B cell (primary cell): ENCODE measurements at regions of chr7 and their contacts with region 1.

Region 1: DNA sequence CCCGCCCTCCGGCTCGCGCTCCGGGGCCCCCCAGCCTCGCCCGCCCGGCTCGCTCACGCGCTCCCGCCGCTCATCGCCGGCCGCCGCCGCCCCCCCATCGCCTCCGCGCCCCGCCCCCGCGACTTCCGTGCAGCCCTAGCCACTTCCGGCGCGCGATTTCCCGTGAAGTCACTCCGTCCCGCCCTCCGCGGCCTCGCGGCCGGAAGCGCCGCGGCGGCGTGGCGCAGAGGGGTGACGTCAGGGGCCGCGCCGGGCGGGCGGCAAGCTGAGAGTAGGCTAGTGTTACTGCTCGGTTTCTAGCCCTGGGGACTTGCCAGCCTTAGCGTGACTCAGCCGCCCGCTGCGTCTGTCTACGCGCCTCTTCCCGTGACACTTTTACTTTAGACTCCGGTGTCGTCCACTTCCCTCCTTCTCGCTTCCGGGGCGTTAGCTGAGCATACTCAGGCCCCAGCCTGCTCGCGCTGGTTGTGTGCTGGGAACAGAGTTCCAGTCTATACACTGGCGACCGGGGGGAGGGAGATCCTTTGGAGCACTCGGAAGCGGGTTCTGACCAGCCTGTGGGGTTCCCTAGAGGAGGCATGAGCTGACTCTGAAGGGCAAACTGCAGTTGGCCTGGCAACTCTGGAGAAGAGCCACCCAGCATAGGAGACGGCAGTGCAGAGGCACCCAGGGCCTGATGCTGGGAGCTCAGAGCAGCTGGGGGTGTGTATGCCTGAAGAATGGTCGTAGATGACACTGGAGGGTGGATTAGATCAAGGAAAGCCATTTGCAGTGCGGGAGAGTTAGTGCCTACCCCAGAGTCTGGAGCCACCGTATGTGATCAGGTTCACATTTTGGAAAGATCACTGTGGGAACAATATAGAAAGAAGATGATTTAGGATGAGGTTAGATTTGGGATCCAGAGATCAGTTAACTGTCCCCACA is at the start of gene PURB:
- DNase-seq: peak; percentile 99
- ATAC-seq: peak; percentile 83
- H3K4me3 ChIP-seq: peak within 1 kb of the TSS; percentile 78 to 83 (median 81)
- H3K4me3 Mint-ChIP-seq: peak within 1 kb of the TSS; percentile 96
- H3K27ac ChIP-seq: peak within 1 kb of the TSS; percentile 96 to 99
- H3K27ac Mint-ChIP-seq: peak within 1 kb of the TSS; percentile 100
- H3K4me1 ChIP-seq: peaks cover 41 to 49% of the 10 kb centered on the region in 2 donors
- H3K4me1 Mint-ChIP-seq: peaks cover 47% of the 10 kb centered on the region
- H3K27me3 ChIP-seq: no peaks in the 10 kb centered on the region
- H3K27me3 Mint-ChIP-seq: no peaks in the 10 kb centered on the region
- CTCF ChIP-seq: no peak
- total RNA-seq, gene PURB: 28.6 and 29.1 TPM in 2 replicates

Region 2: GRCh38 chr7:43925984-43926797 is 959.5 kb before region 1 on chr7 and contains the start of gene UBE2D4:
- CTCF ChIA-PET with region 1: no interaction called
- POLR2A ChIA-PET with region 1: no interaction called
- intact Hi-C with region 1: loop called (anchors 2 kb)
- DNase-seq: peak; percentile 93
- ATAC-seq: peak; percentile 87
- H3K4me3 ChIP-seq: peak within 1 kb of the TSS; percentile 53 to 85 (median 72)
- H3K4me3 Mint-ChIP-seq: peak within 1 kb of the TSS; percentile 95
- H3K27ac ChIP-seq: peak within 1 kb of the TSS; percentile 87 to 94
- H3K27ac Mint-ChIP-seq: peak within 1 kb of the TSS; percentile 96
- H3K4me1 ChIP-seq: peaks cover 8 to 21% of the 10 kb centered on the region in 2 donors
- H3K4me1 Mint-ChIP-seq: peaks cover 18% of the 10 kb centered on the region
- H3K27me3 ChIP-seq: no peaks in the 10 kb centered on the region
- H3K27me3 Mint-ChIP-seq: no peaks in the 10 kb centered on the region
- CTCF ChIP-seq: no peak
- total RNA-seq, gene UBE2D4: 9.4 and 11.4 TPM in 2 replicates

Region 3: DNA sequence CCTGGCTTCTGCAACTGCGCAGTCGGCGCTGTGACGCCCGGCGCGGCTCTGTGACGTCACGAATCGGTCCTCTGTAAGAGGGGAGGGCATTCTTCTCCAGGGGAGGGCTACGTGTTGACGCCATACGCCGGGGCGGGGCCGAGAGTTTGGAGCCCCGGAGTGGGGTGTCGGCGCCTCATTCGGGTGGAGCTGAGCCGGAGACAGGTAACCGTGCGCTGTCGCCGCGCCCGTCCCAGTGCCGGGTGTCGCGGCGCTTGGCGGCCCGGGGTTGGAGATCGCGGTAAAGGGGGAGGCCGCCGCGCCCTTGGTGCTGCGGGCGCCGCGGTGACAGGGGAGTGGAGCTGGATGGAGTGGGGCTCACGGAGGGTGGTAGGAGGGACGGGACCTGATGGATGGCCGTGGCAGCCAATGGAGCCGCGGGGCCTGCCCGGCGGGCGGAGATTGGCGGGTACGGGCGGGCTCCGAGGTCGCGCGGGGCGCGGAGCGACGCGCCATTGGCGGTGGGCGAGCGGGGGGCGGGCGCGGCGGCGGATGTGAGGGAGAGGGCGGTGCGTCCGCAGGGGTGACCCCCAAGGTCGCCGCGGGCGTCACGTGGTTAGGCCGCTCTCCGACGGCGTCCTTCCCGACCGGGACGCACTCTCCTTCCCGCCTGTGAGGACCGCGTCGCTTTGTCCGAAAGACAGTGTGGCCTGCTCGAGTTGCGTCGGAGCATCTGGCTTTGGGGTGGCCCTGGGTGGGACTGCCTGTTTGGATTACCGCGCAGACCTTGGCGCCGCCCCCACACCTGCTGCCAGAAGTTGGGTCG is 279.0 kb before region 1 on chr7 and contains the start of gene OGDH:
- CTCF ChIA-PET with region 1: interaction called, 3 read pairs
- POLR2A ChIA-PET with region 1: interaction called, 14 read pairs
- intact Hi-C with region 1: loop called (anchors 1 kb)
- DNase-seq: peak; percentile 100
- ATAC-seq: peak; percentile 91
- H3K4me3 ChIP-seq: peak within 1 kb of the TSS; percentile 80 to 93 (median 85)
- H3K4me3 Mint-ChIP-seq: peak within 1 kb of the TSS; percentile 99
- H3K27ac ChIP-seq: peak within 1 kb of the TSS; percentile 87 to 96
- H3K27ac Mint-ChIP-seq: peak within 1 kb of the TSS; percentile 99
- H3K4me1 ChIP-seq: peaks cover 15 to 34% of the 10 kb centered on the region in 2 donors
- H3K4me1 Mint-ChIP-seq: peaks cover 41% of the 10 kb centered on the region
- H3K27me3 ChIP-seq: no peaks in the 10 kb centered on the region
- H3K27me3 Mint-ChIP-seq: peaks cover 4% of the 10 kb centered on the region
- CTCF ChIP-seq: no peak
- total RNA-seq, gene OGDH: 71.5 and 80.2 TPM in 2 replicates

Region 4: DNA sequence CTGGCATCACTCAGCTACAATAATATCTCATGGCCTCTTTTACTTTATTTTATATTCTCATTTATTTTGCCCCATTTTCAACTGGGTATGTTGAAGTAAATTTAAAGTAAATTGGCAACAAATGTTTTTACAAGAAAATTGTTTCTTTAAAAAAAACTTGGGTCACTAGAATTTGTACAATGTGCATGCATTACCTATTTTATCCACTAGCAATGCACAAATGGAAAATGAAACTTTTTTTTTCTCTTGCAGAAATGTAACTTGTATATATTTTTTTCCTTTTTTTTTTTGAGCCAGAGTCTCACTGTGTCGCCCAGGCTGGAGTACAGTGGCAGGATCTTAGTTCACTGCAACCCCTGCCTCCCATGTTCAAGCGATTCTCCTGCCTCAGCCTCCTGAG is 27.5 kb before region 1 on chr7:
- CTCF ChIA-PET with region 1: interaction called, 20 read pairs
- POLR2A ChIA-PET with region 1: interaction called, 4 read pairs
- intact Hi-C with region 1: loop called (anchors 2 kb)
- DNase-seq: no peak
- ATAC-seq: no peak
- H3K4me3 ChIP-seq: no peak overlapping the region
- H3K4me3 Mint-ChIP-seq: no peak overlapping the region
- H3K27ac ChIP-seq: no peak overlapping the region
- H3K27ac Mint-ChIP-seq: no peak overlapping the region
- H3K4me1 ChIP-seq: no peaks in the 10 kb centered on the region
- H3K4me1 Mint-ChIP-seq: peaks cover 4% of the 10 kb centered on the region
- H3K27me3 ChIP-seq: no peaks in the 10 kb centered on the region
- H3K27me3 Mint-ChIP-seq: peaks cover 5% of the 10 kb centered on the region
- CTCF ChIP-seq: peak; percentile 43

Region 5: GRCh38 chr7:44921607-44922359 is 36.1 kb after region 1 on chr7:
- CTCF ChIA-PET with region 1: interaction called, 6 read pairs
- POLR2A ChIA-PET with region 1: no interaction called
- intact Hi-C with region 1: loop called (anchors 2 kb)
- DNase-seq: peak; percentile 87
- ATAC-seq: peak; percentile 98
- H3K4me3 ChIP-seq: no peak overlapping the region
- H3K4me3 Mint-ChIP-seq: no peak overlapping the region
- H3K27ac ChIP-seq: no peak overlapping the region
- H3K27ac Mint-ChIP-seq: peak overlapping the region; percentile 53
- H3K4me1 ChIP-seq: no peaks in the 10 kb centered on the region
- H3K4me1 Mint-ChIP-seq: peaks cover 2% of the 10 kb centered on the region
- H3K27me3 ChIP-seq: peaks cover 0 to 4% (median 2%) of the 10 kb centered on the region in 4 experiments
- H3K27me3 Mint-ChIP-seq: peaks cover 5% of the 10 kb centered on the region
- CTCF ChIP-seq: peak; percentile 86

Region 6: GRCh38 chr7:44999245-45000095 is 113.8 kb after region 1 on chr7:
- CTCF ChIA-PET with region 1: interaction called, 3 read pairs
- POLR2A ChIA-PET with region 1: interaction called, 8 read pairs
- intact Hi-C with region 1: loop called (anchors 1 kb)
- DNase-seq: peak; percentile 100
- ATAC-seq: peak; percentile 84
- H3K4me3 ChIP-seq: peak overlapping the region; percentile 40 to 99 (median 76)
- H3K4me3 Mint-ChIP-seq: peak overlapping the region; percentile 99
- H3K27ac ChIP-seq: peak overlapping the region; percentile 65 to 72
- H3K27ac Mint-ChIP-seq: peak overlapping the region; percentile 98
- H3K4me1 ChIP-seq: peaks cover 36 to 50% of the 10 kb centered on the region in 2 donors
- H3K4me1 Mint-ChIP-seq: peaks cover 57% of the 10 kb centered on the region
- H3K27me3 ChIP-seq: no peaks in the 10 kb centered on the region
- H3K27me3 Mint-ChIP-seq: no peaks in the 10 kb centered on the region
- CTCF ChIP-seq: no peak

Region 7: DNA sequence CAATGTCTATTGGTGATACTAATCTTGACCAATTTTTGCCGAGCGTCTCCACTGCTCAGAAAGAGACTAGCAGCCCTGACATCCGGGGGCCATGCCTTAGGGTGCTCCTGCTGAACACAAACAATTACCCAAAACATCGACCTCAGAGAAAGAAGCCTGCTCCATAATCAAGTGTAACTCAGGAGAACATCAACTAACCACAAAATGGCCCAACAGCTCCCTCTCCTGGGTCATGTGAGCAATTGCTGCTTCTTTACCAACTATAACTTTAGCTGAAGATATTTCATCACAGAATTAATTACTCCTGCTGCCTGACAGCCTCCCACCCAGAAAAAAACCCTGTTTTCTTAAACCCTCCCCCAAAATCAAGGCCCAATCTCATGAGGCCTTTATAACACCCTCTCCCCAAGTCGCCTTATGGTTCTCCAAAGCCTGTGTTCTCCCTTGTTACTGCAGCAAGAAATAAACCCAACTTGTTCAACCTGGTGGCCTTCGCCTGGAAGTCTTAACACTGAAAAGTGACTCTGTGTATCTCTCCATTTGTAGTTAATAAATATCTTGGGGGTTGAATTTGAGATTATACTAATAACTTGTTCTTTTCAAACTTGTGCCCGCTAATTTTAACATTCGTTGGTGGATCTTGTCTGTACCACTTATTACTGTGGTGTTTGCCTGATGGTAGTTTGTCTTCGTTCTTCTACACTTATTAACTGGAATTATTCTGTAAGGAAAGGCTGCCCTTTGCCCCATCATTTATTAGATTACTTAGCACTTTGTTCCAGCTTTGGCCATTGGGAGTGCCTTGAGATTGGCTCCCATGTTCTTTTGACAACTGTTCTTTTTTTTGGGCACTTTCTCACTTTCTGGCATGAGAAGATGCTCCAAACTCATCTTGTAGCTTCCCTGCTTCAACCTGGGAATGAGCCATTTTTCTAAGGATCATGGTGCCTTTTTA is 250.7 kb after region 1 on chr7:
- CTCF ChIA-PET with region 1: interaction called, 5 read pairs
- POLR2A ChIA-PET with region 1: no interaction called
- intact Hi-C with region 1: loop called (anchors 1 kb)
- DNase-seq: peak; percentile 80
- ATAC-seq: peak; percentile 97
- H3K4me3 ChIP-seq: no peak overlapping the region
- H3K4me3 Mint-ChIP-seq: no peak overlapping the region
- H3K27ac ChIP-seq: no peak overlapping the region
- H3K27ac Mint-ChIP-seq: no peak overlapping the region
- H3K4me1 ChIP-seq: peaks cover 5 to 18% of the 10 kb centered on the region in 2 donors
- H3K4me1 Mint-ChIP-seq: peaks cover 17% of the 10 kb centered on the region
- H3K27me3 ChIP-seq: peaks cover 0 to 3% (median 0%) of the 10 kb centered on the region in 4 experiments
- H3K27me3 Mint-ChIP-seq: no peaks in the 10 kb centered on the region
- CTCF ChIP-seq: peak; percentile 91